PC-3 (cell line): ENCODE measurements at regions of chr2 and their contacts with region 1.

Region 1: GRCh38 chr2:216013080-216013909 is at the start of gene MREG:
- DNase-seq: peak; percentile 88
- ATAC-seq: peak; percentile 74
- H3K4me3 ChIP-seq: peak within 1 kb of the TSS; percentile 87
- H3K27ac ChIP-seq: peak within 1 kb of the TSS; percentile 89
- H3K4me1 ChIP-seq: peaks cover 28% of the 10 kb centered on the region
- H3K27me3 ChIP-seq: no peaks in the 10 kb centered on the region
- CTCF ChIP-seq: peak; percentile 59
- total RNA-seq, gene MREG: 24.4 and 35.4 TPM in 2 replicates

Region 2: DNA sequence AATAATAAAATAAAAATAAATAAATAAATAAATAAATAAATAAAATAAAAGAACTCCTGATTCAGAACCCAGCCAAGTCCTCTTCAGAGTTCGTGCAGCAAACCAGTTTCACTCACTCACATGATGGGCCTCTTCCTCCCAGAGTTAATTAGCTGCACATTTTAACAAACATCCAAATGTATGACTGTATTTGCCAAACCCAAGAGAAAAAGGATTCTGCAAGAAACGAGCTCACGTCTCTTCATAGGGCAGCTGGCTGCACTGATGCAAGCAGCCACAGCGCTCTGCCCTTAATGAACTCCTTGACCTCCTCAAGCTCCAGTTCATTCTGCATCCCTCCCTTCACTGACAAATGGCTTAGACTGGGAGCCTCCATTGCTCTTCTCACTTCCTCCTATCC is 55.0 kb before region 1 on chr2:
- CTCF ChIA-PET with region 1: no interaction called
- POLR2A ChIA-PET with region 1: no interaction called
- intact Hi-C with region 1: no loop called
- DNase-seq: no peak
- ATAC-seq: no peak
- H3K4me3 ChIP-seq: no peak overlapping the region
- H3K27ac ChIP-seq: no peak overlapping the region
- H3K4me1 ChIP-seq: no peaks in the 10 kb centered on the region
- H3K27me3 ChIP-seq: no peaks in the 10 kb centered on the region
- CTCF ChIP-seq: no peak

Region 3: DNA sequence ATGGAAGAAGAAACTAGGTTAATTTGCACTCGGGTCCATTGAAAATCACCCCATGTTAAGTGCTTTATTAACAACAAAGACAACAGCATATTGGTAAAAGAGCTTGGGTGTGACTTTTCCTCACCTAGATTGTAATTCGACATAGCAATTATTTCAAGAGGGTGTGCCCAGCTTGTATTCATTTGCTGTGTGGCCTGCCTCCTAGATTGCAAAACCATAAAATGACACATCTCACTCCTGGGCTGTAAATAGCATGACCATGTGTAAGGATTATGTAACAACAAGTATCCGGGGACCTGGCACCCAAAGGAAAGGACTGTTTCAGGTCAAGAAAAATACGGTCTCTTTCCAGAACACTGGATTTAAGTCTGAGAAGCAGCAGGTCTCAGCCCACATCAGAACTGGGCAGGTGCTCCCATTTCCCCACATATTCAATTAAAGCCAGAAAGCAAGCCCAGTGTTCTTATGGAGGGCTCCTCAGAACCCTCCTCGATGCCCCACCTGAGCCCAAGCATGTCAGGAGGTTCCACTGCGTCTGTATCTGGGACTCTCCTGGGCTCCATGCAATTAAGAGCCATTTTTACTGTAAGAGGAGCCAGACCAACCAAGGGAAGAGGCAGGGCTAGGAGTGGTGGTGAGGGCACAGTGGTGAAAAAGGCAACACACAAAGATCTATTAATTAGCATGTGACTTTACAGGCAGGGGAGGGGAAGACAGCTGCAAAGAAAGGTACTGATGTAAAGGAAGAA is 39.2 kb before region 1 on chr2:
- CTCF ChIA-PET with region 1: no interaction called
- POLR2A ChIA-PET with region 1: no interaction called
- intact Hi-C with region 1: loop called (anchors 5 kb)
- DNase-seq: peak; percentile 64
- ATAC-seq: peak; percentile 87
- H3K4me3 ChIP-seq: no peak overlapping the region
- H3K27ac ChIP-seq: peak overlapping the region; percentile 2; the same call in 1 of the 2 replicates
- H3K4me1 ChIP-seq: peaks cover 13% of the 10 kb centered on the region
- H3K27me3 ChIP-seq: no peaks in the 10 kb centered on the region
- CTCF ChIP-seq: 0 out of 2 replicates have a peak, but pooled peaks have one; percentile 13